ENCODE measurements at regions of chr20 and their contacts with region 1.

Region 1: DNA sequence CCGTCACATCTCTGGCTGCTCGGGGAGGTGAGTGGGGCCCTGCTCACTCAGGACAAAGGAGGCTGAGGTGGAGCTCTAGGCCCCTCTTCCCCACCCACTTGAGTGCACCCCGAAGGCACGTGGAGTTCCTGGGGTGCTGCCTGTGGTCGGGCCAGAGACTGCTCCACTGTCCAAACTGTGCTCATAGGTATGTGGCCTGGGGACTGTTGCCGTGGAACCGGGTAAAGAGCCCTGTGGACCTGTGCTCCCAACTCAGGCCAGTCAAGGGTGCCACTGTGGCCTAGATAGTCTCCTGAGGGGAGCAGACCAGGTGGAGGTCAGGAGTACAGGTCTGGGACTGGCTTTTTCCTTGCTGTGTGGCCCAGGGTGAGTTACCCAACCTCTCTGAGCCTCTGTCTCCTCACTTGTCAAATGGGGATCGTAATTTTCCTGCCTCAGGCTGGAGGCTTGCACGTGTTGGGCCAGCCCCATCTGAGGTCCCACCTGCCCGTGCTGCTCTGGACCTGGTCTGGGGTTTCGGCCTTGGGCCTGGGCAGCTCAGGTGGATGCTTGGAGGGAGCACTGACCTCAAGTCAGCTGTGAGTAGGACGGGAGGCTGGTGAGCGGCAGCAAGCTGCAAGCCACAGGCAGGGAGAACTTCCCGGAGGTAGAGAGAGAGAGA is 12.4 kb upstream of the NPBWR2 start:
- DNase-seq: peak; percentile 20
- H3K4me3 Mint-ChIP-seq: peak overlapping the region; percentile 60
- H3K27ac Mint-ChIP-seq: peak overlapping the region; percentile 75
- H3K4me1 Mint-ChIP-seq: peaks cover 9% of the 10 kb centered on the region
- H3K27me3 Mint-ChIP-seq: peaks cover 47% of the 10 kb centered on the region

Region 2: DNA sequence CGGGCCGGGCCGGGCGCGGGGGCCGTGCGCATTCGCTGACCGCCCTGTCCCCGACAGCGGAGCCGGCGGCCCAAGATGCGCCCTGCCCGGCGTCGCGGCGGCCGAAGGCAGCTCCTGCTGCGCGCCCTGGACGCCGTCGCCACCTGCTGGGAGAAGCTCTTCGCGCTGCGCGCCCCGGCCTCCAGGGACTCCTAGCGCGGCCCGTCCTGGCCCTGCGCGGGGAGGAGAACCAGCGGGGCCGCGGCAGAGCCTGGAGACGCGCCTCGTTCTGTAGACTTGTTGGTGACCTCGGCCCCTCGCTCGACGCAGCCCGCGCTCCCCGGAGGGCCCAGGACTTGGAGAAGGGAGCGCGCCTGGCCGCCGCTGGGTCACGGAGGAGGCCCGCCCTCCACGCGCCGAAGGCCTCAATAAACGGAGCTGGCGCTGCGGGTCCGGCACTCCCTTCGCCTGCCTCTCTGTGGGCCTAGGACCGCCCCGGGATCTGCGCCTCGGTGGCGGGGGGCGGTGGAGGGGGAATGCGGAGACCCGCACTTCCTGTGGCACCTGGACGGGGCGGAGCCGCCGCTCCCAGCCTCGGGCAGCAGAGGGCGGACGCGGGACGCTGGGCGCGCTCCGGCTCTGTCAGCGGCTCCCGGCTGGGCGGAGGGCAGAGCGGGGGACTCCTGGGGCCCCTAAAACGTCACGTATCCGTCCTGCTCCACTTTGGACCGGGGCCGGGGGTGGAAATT is 81.1 kb before region 1 on chr20:
- CTCF ChIA-PET with region 1: interaction called, 24 read pairs
- DNase-seq: peak; percentile 86
- H3K4me3 Mint-ChIP-seq: peak overlapping the region; percentile 67
- H3K27ac Mint-ChIP-seq: peak overlapping the region; percentile 71
- H3K4me1 Mint-ChIP-seq: peaks cover 70% of the 10 kb centered on the region
- H3K27me3 Mint-ChIP-seq: peaks cover 40% of the 10 kb centered on the region

Region 3: GRCh38 chr20:64072498-64073063 is 47.2 kb before region 1 on chr20:
- CTCF ChIA-PET with region 1: interaction called, 10 read pairs
- DNase-seq: no peak
- H3K4me3 Mint-ChIP-seq: no peak overlapping the region
- H3K27ac Mint-ChIP-seq: no peak overlapping the region
- H3K4me1 Mint-ChIP-seq: peaks cover 51% of the 10 kb centered on the region
- H3K27me3 Mint-ChIP-seq: no peaks in the 10 kb centered on the region

Region 4: GRCh38 chr20:64083378-64083803 is 36.4 kb before region 1 on chr20:
- CTCF ChIA-PET with region 1: interaction called, 75 read pairs
- DNase-seq: peak; percentile 82
- H3K4me3 Mint-ChIP-seq: peak overlapping the region; percentile 75
- H3K27ac Mint-ChIP-seq: no peak overlapping the region
- H3K4me1 Mint-ChIP-seq: peaks cover 35% of the 10 kb centered on the region
- H3K27me3 Mint-ChIP-seq: peaks cover 70% of the 10 kb centered on the region

Region 5: DNA sequence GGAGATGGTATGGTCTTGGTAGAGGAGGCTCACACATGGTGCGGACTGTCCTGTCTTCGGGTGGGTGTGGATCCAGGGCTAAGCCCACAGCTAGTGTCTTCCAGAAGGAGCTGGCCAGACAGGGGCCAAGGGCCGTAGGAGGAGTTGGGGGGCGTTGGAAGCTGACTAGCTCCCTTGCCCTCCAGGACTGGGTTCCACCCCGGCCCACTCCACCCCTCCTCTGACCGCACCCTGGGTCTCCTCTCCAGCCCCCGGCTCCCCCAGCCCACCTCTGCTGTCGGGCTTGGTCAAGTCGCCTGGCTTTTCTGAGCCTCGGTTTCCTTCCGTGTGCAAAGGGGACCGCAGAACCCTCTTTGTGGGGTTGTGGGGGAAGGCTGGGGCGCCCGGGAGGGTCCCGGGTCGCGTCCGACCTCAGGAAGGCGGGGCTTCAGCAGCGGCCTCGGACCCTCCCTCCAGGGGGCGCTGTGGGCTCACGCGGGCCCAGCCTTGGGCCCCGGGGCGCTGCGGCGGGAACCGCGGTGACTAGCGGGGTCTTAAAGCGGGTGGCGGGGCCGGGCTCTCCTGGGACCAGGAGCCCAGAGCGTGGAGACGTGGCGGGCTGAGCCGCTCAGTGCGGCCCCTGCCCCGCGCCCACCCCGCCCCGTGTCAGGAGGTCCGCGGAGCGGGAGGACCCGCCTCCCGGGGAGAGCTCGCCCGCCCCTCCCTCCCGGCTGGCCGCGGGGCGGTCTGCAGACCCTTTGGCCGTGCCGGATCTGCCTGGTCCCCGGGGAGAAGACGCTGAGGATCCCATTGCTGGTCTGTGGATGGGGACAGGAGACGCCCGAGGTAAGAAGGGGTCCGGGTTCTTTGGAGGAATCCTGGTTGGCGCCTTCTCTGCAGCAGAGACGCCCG is 17.8 kb before region 1 on chr20:
- CTCF ChIA-PET with region 1: interaction called, 13 read pairs
- DNase-seq: peak; percentile 77
- H3K4me3 Mint-ChIP-seq: no peak overlapping the region
- H3K27ac Mint-ChIP-seq: no peak overlapping the region
- H3K4me1 Mint-ChIP-seq: peaks cover 6% of the 10 kb centered on the region
- H3K27me3 Mint-ChIP-seq: peaks cover 62% of the 10 kb centered on the region

Region 6: DNA sequence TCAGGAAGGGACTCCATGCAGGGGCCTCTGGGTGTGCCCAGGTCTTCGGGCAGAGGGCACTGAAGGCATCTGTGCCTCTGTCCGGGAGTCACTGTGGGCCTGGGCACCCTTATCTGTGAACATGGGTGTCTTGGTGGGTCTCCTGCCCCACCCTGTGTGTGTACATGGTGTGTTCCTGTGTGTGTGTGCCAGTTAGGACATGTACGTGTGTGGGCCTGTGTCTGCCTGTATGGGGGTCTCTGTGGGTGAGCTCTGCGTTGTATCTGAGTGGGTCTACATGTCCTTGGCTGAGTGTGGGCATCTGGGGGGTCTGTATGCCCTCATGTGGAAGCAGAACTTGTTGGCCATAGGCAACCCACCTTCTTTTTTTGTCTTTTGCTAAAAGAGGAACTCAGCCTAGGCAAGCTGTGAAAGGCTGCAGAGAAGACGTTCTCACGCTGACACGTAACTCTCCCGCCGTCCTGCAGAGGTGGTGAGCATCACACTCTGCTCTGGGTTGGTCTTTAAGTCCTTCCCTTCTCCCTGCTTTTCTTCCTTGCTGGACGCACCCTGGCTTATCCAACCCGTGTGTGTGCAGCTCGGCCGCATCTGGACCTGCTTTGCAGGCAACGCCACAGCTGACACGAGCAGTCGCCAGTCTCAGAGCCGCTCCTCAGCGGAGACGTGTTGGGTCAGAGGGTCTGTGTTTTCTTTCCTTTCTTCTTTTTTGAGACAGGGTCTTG is 11.9 kb before region 1 on chr20:
- CTCF ChIA-PET with region 1: interaction called, 28 read pairs
- DNase-seq: peak; percentile 16
- H3K4me3 Mint-ChIP-seq: no peak overlapping the region
- H3K27ac Mint-ChIP-seq: no peak overlapping the region
- H3K4me1 Mint-ChIP-seq: no peaks in the 10 kb centered on the region
- H3K27me3 Mint-ChIP-seq: peaks cover 50% of the 10 kb centered on the region

Measured in activated naive CD4-positive, alpha-beta T cell treated with anti-CD3 and anti-CD28 coated beads, Interleukin-2, amount 10 ng/mL, durations not matched to agents 7 days and 5 days (primary cell).